Dendritic cell treated with granulocyte-macrophage colony-stimulating factor and Interleukin-4, amounts not matched to agents 40 ng/mL and 50 ng/mL, for 4 days (primary cell): ENCODE measurements at regions of chr11 and their contacts with region 1.

Region 1: GRCh38 chr11:112156956-112157766 is 6.7 kb downstream of the IL18 start:
- H3K4me3 Mint-ChIP-seq: no peak overlapping the region
- H3K27ac Mint-ChIP-seq: no peak overlapping the region
- H3K4me1 Mint-ChIP-seq: peaks cover 41% of the 10 kb centered on the region
- H3K27me3 Mint-ChIP-seq: no peaks in the 10 kb centered on the region

Region 2: DNA sequence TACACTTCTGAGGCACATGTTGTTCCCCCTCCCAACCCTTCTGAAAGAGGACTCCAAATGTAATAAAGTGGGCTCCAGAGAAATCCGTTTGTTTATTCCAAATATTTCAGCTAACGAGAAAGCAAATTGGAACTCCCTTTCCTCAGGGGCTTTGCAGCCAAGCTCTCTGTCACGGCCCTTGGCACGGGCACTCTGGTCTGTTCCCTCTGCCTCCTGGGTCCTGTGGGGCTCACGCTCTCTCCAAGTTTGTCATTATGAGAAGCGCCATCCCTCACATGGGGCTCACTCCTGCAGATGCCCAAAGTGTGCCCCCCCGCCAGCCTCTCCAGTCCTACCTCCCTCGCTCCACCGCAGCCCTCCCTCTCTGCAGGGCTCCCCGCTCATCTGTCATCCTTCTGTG is 1037.0 kb before region 1 on chr11:
- intact Hi-C with region 1: no loop called
- H3K4me3 Mint-ChIP-seq: no peak overlapping the region
- H3K27ac Mint-ChIP-seq: no peak overlapping the region
- H3K4me1 Mint-ChIP-seq: no peaks in the 10 kb centered on the region
- H3K27me3 Mint-ChIP-seq: peaks cover 2% of the 10 kb centered on the region

Region 3: GRCh38 chr11:112050721-112051120 is 106.4 kb before region 1 on chr11:
- intact Hi-C with region 1: no loop called
- H3K4me3 Mint-ChIP-seq: no peak overlapping the region
- H3K27ac Mint-ChIP-seq: peak overlapping the region; percentile 22
- H3K4me1 Mint-ChIP-seq: peaks cover 23% of the 10 kb centered on the region
- H3K27me3 Mint-ChIP-seq: no peaks in the 10 kb centered on the region

Region 4: DNA sequence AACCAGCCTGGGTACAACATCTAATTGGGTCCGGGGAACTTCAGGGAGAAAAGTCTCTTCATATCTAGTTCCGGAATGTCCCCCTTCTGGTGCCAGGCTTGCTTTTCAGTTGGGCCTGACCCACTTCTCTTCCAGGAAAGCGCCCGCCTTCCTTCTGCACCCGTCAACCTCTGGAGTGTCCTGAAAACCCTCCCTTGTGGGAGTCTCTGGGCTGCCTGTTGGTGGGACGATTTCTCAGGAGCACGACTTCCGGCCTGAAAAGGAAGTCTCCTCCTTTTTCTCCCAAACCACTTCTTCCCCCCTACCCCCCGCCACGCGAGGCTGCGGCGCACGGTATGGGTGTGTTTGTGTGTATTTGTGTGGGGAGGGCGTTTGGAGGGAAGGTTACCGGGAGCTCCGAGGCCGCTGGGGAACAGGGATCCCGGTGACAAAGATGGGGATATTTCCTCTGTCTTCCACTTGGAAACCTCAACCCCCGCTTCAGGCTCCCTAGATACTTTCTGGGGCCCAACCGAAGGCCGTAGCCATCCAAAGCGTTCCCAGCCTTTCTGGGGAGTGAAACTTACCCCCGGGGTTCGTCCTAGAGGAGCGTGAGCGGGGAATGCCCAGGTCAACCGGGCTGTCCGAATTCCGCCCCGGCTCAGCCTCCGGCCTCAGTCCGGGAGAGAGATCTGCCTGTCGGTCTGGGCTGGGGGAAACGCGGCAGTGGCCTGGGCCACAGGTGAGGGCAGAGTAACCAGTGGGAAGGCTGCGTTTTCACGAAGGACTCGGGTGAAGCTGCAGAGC is 82.9 kb before region 1 on chr11 and contains the start of gene NKAPD1:
- intact Hi-C with region 1: no loop called
- H3K4me3 Mint-ChIP-seq: peak within 1 kb of the TSS; percentile 96
- H3K27ac Mint-ChIP-seq: peak within 1 kb of the TSS; percentile 100
- H3K4me1 Mint-ChIP-seq: peaks cover 34% of the 10 kb centered on the region
- H3K27me3 Mint-ChIP-seq: no peaks in the 10 kb centered on the region

Region 5: GRCh38 chr11:112121981-112122615 is 35.1 kb before region 1 on chr11:
- intact Hi-C with region 1: loop called (anchors 5 kb)
- H3K4me3 Mint-ChIP-seq: no peak overlapping the region
- H3K27ac Mint-ChIP-seq: no peak overlapping the region
- H3K4me1 Mint-ChIP-seq: peaks cover 19% of the 10 kb centered on the region
- H3K27me3 Mint-ChIP-seq: no peaks in the 10 kb centered on the region

Region 6: GRCh38 chr11:112216591-112217105 is 59.5 kb after region 1 on chr11:
- intact Hi-C with region 1: no loop called
- H3K4me3 Mint-ChIP-seq: no peak overlapping the region
- H3K27ac Mint-ChIP-seq: no peak overlapping the region
- H3K4me1 Mint-ChIP-seq: peaks cover 6% of the 10 kb centered on the region
- H3K27me3 Mint-ChIP-seq: no peaks in the 10 kb centered on the region